ENCODE measurements at regions of chr17 and their contacts with region 1.

Region 1: GRCh38 chr17:14605267-14605599 is 304.4 kb downstream of the HS3ST3B1 start:
- H3K4me3 Mint-ChIP-seq: peak overlapping the region; percentile 66
- H3K27ac Mint-ChIP-seq: peak overlapping the region; percentile 98
- H3K4me1 Mint-ChIP-seq: peaks cover 36% of the 10 kb centered on the region
- H3K27me3 Mint-ChIP-seq: no peaks in the 10 kb centered on the region

Region 2: DNA sequence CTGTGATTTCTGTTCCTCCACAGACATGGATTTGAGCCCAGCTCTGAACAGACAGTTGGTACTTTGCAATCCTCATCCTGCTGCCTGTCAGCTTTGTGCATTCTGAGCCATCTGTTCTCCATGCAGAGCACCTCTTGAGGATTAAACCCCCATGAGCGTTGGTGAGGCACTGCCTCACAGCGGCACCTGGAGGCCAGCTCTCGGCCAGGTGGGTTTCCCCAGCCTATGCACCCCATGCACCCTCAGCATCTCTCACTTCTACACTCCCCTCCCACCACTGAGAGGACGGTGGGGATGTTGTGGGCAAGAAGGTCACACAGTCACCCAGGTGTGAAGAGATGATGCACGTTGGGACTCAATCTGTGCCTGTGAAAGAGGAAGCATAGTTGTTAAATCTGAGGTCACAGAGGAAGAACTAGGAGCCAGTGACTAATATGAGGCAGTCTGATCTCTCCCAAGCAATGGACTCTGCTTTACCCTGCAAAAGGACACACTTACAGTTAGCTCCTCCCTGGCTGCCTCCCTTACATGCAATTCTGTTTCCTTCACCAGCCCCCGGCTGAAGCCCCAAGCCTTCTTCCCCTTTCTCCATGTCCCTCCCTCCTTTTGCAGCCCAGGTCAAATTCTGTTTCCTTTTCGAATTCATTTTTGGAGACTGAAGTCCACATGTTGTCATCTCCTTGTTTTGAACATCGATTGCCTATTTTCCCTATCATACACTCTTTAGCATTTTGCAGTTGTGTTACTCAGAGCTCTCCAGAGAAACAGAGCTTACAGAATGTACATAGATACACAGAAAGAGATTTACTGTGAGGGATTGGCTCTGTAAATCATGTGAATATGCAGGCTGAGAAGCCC is 245.8 kb before region 1 on chr17:
- intact Hi-C with region 1: loop called (anchors 10 kb)
- H3K4me3 Mint-ChIP-seq: peak overlapping the region; percentile 43
- H3K27ac Mint-ChIP-seq: peak overlapping the region; percentile 24
- H3K4me1 Mint-ChIP-seq: peaks cover 29% of the 10 kb centered on the region
- H3K27me3 Mint-ChIP-seq: no peaks in the 10 kb centered on the region

Region 3: GRCh38 chr17:14553855-14554254 is 51.4 kb before region 1 on chr17:
- intact Hi-C with region 1: loop called (anchors 5 kb)
- H3K4me3 Mint-ChIP-seq: no peak overlapping the region
- H3K27ac Mint-ChIP-seq: no peak overlapping the region
- H3K4me1 Mint-ChIP-seq: peaks cover 23% of the 10 kb centered on the region
- H3K27me3 Mint-ChIP-seq: peaks cover 1% of the 10 kb centered on the region

Region 4: DNA sequence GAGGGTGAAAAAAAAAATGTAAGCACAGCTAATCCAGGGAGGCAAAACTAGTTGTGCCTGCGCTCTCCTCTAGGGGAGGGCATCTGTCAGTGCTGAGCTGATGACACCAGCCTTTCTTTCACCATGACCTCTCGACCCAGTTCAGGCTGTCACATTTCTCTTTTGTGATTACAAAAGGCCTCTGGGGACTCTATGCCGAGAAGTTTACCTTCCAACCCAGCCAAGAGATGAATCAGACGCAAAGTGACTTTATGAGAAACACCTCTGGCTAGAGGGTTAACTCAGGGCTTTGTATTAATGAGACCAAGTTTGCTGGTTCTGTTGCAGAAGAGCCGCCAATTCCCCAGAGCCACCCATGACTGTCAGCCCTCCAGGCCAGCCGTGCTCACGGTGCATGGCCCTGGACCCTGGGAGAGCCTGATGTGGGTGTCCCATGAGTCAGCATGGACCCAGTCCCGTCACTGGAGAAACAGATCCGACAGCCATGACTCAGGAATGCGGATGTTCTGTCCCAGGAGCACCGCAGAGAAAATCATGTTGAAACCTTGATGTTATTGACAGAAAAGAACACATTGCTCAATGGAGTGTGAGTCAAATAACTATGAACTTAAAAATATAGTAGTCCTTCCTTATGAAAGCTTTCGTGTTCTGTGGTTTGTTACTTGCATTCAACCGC is 132.9 kb after region 1 on chr17:
- intact Hi-C with region 1: loop called (anchors 1 kb)
- H3K4me3 Mint-ChIP-seq: no peak overlapping the region
- H3K27ac Mint-ChIP-seq: peak overlapping the region; percentile 48
- H3K4me1 Mint-ChIP-seq: peaks cover 63% of the 10 kb centered on the region
- H3K27me3 Mint-ChIP-seq: no peaks in the 10 kb centered on the region

Region 5: DNA sequence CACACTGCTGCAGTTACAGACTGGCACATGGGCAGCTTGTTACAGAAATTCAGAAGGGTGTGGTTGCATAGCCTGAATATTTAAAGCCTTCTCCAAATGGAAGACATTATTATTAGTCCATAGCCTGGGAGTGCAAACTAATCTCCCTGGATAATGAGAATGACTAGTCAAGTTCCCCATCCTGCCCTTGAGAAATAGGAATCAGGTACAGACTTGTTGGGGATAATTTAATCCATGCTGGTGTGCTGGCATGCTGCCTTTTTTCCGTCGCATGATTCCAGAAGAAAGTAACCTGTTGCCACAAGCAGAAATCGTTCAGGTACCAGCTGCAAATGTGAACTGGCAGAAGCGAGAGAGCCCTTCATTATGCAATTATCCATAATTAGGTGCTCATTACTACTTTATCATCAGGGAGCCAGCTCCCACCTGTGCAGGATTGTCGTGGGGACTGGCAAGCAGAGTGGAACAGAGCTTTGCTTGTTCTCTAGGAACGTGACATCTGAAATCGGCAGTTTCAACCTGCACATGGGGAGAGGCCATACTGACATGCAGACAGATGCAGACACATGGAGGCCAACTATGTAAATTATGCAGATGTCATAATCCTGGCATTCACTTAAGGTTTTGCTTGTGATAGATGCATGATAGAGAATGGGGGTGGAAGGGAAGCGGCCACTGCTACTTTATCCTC is 240.5 kb after region 1 on chr17:
- intact Hi-C with region 1: no loop called
- H3K4me3 Mint-ChIP-seq: no peak overlapping the region
- H3K27ac Mint-ChIP-seq: no peak overlapping the region
- H3K4me1 Mint-ChIP-seq: no peaks in the 10 kb centered on the region
- H3K27me3 Mint-ChIP-seq: no peaks in the 10 kb centered on the region

Measured in dendritic cell treated with granulocyte-macrophage colony-stimulating factor and Interleukin-4, amounts not matched to agents 40 ng/mL and 50 ng/mL, for 4 days (primary cell).